Common myeloid progenitor, CD34-positive (primary cell): ENCODE measurements at regions of chr2 and their contacts with region 1.

Region 1: DNA sequence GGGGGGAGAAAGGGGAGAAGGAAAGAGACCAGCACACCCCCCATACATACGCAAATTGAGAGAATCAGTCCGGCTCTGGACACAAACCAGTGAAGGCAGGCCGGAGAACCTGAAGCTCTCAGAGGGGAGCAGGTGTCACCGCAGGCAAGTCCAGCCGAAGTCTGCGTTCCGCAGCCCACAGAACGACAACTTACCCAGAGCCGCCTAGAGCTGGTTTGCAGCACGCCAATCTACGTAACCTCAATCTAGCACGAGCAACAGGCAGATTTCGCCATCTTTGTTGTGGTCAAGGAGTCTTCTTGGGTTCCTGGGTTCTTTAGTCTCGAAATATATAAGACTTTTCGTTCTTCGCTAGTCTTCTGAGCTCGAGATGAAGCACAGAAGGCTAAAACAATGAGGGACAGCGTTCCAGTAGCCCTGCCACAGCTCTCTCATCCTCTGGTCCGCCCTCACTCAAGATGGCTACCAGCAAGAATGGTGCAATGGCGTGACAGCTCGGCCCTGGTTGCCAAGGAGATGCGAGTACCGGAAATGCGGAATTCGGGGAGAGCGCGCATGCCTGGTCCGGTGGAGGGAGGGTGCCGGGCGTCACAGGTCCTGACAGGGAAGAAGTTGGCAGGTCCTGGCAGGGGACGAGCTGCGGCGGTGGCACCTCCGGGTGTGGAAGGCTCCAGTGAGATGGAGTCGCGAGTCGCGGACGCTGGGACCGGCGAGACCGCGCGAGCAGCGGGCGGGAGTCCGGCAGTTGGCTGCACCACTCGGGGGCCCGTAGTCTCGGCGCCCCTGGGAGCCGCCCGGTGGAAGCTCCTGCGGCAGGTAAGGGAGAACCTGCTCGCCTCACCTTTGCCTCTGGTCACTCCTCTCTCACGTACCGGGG is at the starts of genes CAMKMT and PREPL:
- DNase-seq: peak; percentile 98 to 99 (median 98)
- H3K4me3 ChIP-seq: peak within 1 kb of the TSS; percentile 83 to 98 (median 89)
- H3K27ac ChIP-seq: peak within 1 kb of the TSS; percentile 100
- H3K4me1 ChIP-seq: peaks cover 5 to 23% (median 20%) of the 10 kb centered on the region in 4 experiments
- H3K27me3 ChIP-seq: peaks cover 0 to 3% (median 0%) of the 10 kb centered on the region in 5 experiments

Region 2: DNA sequence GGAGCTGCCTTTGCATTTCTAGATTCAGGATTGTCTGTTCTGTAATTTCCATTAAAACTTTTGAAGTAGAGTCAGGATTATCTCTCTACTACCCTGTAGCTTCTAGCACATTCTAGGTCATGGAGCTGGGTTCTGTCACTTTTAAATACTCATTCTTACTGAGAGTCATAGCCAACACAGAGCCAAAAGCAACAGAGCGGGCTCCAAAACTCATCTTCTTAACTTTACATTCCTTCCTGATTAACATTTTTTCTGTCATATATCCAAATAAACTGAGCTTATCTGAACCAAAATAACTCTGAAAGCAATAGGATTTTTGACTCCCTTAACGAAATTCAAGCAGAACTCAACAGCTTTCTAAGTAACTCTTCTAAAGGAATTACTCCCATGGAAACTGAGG is 13.2 kb before region 1 on chr2:
- CTCF ChIA-PET with region 1: interaction called, 11 read pairs
- POLR2A ChIA-PET with region 1: no interaction called
- DNase-seq: no peak
- H3K4me3 ChIP-seq: no peak overlapping the region
- H3K27ac ChIP-seq: no peak overlapping the region
- H3K4me1 ChIP-seq: no peaks in the 10 kb centered on the region
- H3K27me3 ChIP-seq: no peaks in the 10 kb centered on the region

Region 3: GRCh38 chr2:44420725-44421124 is 59.2 kb after region 1 on chr2:
- CTCF ChIA-PET with region 1: no interaction called
- POLR2A ChIA-PET with region 1: no interaction called
- DNase-seq: no peak
- H3K4me3 ChIP-seq: no peak overlapping the region
- H3K27ac ChIP-seq: no peak overlapping the region
- H3K4me1 ChIP-seq: no peaks in the 10 kb centered on the region
- H3K27me3 ChIP-seq: no peaks in the 10 kb centered on the region